ENCODE measurements at regions of chr1 and their contacts with region 1.

Region 1: GRCh38 chr1:54791880-54792522 is 9.1 kb downstream of the TTC22 start:
- DNase-seq: peak; percentile 81 to 82 (median 82)
- ATAC-seq: peak; percentile 78
- H3K4me3 ChIP-seq: no peak overlapping the region
- H3K27ac ChIP-seq: no peak overlapping the region
- H3K4me1 ChIP-seq: peaks cover 0 to 3% of the 10 kb centered on the region in 2 experiments; a peak in 1 of 5 replicates
- H3K27me3 ChIP-seq: peaks cover 0 to 29% of the 10 kb centered on the region in 2 experiments; a peak in 3 of 5 replicates
- CTCF ChIP-seq: peak; percentile 80 to 97 (median 91)
- EP300 ChIP-seq: no peak
- POLR2A ChIP-seq: no peak
- RAD21 ChIP-seq: peak; percentile 74 to 94

Region 2: DNA sequence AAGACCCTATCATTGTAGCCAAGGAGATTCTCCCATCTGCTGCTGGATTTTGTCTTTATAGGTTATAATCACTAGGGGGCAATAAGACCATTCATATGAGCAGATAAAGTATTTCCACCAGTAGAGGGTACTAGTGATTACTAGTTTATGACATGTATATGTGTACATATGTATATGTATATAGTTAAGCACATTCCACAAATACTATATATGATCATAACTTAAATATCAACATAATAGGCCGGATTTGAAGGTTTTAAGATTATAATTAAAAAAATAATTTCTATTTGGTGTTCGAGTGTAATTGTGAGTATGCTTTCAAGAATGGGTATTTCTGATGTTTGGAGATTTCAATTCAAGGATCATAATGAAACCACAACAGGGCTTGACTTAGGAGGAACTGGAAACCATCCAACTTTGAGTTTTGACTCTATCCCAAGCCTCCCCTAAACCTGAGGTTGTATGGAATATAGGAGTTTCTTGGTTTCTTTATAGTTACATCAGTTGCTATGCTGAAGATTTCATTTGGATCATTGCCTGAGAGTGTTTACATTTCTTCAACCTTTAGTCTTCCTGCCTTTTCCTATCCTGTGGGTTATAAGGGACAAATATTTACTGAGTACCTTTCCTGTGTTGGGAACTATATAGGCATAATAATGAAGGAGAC is 721.7 kb before region 1 on chr1:
- CTCF ChIA-PET with region 1: interaction called, 7 read pairs
- POLR2A ChIA-PET with region 1: no interaction called
- in situ Hi-C with region 1: no loop called
- intact Hi-C with region 1: loop called (anchors 10 kb)
- DNase-seq: peak; percentile 57 to 70 (median 64)
- ATAC-seq: peak; percentile 95
- H3K4me3 ChIP-seq: no peak overlapping the region
- H3K27ac ChIP-seq: no peak overlapping the region
- H3K4me1 ChIP-seq: peaks cover 5 to 8% of the 10 kb centered on the region in 2 experiments; a peak in 1 of 5 replicates
- H3K27me3 ChIP-seq: no peaks in the 10 kb centered on the region
- CTCF ChIP-seq: peak; percentile 79 to 100 (median 99)
- EP300 ChIP-seq: no peak
- POLR2A ChIP-seq: no peak
- RAD21 ChIP-seq: peak; percentile 95 to 97

Region 3: DNA sequence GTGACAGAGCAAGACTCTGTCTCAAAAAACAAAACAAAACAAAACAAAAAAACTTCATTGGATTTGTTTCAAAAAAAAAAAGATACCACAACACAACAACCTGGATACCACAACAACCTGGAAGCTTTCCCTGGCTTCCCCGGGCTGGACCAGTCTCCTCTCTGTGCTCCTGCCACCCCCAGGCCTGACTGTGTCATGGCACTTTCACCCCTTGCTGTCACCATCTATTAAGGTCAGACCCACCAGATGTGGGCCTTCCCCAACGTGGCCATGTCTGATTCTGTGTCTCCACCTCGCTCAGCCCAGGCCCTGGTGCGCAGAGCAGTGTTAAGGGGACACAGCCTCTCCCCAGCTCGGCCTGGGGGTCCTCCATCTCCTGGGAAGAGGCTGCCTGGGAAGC is 272.3 kb before region 1 on chr1:
- CTCF ChIA-PET with region 1: no interaction called
- POLR2A ChIA-PET with region 1: no interaction called
- in situ Hi-C with region 1: no loop called
- intact Hi-C with region 1: loop called (anchors 5 kb)
- DNase-seq: peak in 1 of 4 experiments; percentile 61
- ATAC-seq: peak; percentile 85
- H3K4me3 ChIP-seq: no peak overlapping the region
- H3K27ac ChIP-seq: no peak overlapping the region
- H3K4me1 ChIP-seq: no peaks in the 10 kb centered on the region
- H3K27me3 ChIP-seq: peaks cover 14 to 17% of the 10 kb centered on the region in 2 experiments
- CTCF ChIP-seq: peak; percentile 49 to 56 (median 51)
- EP300 ChIP-seq: no peak
- POLR2A ChIP-seq: no peak
- RAD21 ChIP-seq: peak in 1 of 2 experiments; percentile 27; a peak in 2 of 4 replicates

Region 4: DNA sequence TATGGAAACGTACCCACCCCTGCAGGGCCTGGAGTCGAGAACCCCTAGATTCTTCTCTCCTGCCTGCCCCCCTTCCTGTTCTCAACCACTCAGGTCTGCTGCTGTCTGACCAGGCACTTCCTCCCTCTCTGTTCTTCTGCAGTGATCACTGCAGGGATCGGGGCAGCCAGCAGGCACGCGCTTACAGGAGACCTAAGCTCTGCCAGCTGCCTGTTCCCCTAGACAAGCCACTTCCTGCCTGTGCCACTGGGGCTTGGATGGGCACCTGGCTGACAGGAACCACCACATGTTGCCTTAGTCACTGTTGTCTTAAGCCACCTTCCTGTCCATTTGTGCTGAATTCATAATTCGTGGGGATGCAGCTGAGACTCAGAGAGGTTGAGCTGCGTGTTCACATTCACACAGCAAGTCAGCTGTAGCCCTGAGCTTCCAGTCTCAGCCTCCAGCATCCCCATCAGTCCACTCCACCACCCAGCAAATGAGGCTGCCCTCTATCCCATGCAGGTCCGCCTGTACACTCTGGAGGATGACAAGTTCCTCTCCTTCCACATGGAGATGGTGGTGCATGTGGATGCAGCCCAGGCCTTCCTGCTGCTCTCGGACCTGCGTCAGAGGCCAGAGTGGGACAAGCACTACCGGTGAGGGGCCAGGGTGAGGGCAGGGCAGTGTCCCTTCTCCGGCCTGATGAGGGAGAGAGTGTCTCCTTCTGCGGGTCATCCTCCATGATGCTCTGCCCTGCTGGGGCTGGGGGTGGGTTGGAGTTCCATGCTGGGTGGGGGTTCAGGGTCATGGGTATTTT is 187.2 kb before region 1 on chr1:
- CTCF ChIA-PET with region 1: no interaction called
- POLR2A ChIA-PET with region 1: no interaction called
- in situ Hi-C with region 1: no loop called
- intact Hi-C with region 1: no loop called
- DNase-seq: no peak
- ATAC-seq: no peak
- H3K4me3 ChIP-seq: no peak overlapping the region
- H3K27ac ChIP-seq: no peak overlapping the region
- H3K4me1 ChIP-seq: peaks cover 0 to 21% of the 10 kb centered on the region in 2 experiments; a peak in 2 of 5 replicates
- H3K27me3 ChIP-seq: peaks cover 53 to 89% of the 10 kb centered on the region in 2 experiments
- CTCF ChIP-seq: no peak
- EP300 ChIP-seq: no peak
- POLR2A ChIP-seq: no peak
- RAD21 ChIP-seq: no peak

Region 5: GRCh38 chr1:54671985-54672608 is 119.9 kb before region 1 on chr1:
- CTCF ChIA-PET with region 1: interaction called, 13 read pairs
- POLR2A ChIA-PET with region 1: no interaction called
- in situ Hi-C with region 1: loop called (anchors 5 kb)
- intact Hi-C with region 1: loop called (anchors 1 kb)
- DNase-seq: peak; percentile 69 to 86 (median 80)
- ATAC-seq: peak; percentile 93
- H3K4me3 ChIP-seq: no peak overlapping the region
- H3K27ac ChIP-seq: no peak overlapping the region
- H3K4me1 ChIP-seq: no peaks in the 10 kb centered on the region
- H3K27me3 ChIP-seq: peaks cover 13 to 19% of the 10 kb centered on the region in 2 experiments; a peak in 4 of 5 replicates
- CTCF ChIP-seq: peak; percentile 92 to 97 (median 95)
- EP300 ChIP-seq: no peak
- POLR2A ChIP-seq: no peak
- RAD21 ChIP-seq: peak; percentile 91 to 98

Region 6: DNA sequence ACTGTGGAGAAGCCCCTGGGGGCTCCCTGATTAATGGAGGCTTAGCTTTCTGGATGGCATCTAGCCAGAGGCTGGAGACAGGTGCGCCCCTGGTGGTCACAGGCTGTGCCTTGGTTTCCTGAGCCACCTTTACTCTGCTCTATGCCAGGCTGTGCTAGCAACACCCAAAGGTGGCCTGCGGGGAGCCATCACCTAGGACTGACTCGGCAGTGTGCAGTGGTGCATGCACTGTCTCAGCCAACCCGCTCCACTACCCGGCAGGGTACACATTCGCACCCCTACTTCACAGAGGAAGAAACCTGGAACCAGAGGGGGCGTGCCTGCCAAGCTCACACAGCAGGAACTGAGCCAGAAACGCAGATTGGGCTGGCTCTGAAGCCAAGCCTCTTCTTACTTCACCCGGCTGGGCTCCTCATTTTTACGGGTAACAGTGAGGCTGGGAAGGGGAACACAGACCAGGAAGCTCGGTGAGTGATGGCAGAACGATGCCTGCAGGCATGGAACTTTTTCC is 272.1 kb after region 1 on chr1:
- CTCF ChIA-PET with region 1: no interaction called
- POLR2A ChIA-PET with region 1: no interaction called
- in situ Hi-C with region 1: no loop called
- intact Hi-C with region 1: no loop called
- DNase-seq: no peak
- ATAC-seq: peak; percentile 16; the same call in 2 of the 3 replicates
- H3K4me3 ChIP-seq: no peak overlapping the region
- H3K27ac ChIP-seq: no peak overlapping the region
- H3K4me1 ChIP-seq: peaks cover 0 to 8% of the 10 kb centered on the region in 2 experiments; a peak in 2 of 5 replicates
- H3K27me3 ChIP-seq: no peaks in the 10 kb centered on the region
- CTCF ChIP-seq: no peak
- EP300 ChIP-seq: no peak
- POLR2A ChIP-seq: peak; percentile 10; the same call in 1 of the 2 replicates
- RAD21 ChIP-seq: no peak